ENCODE measurements at regions of chr16 and their contacts with region 1.

Region 1: DNA sequence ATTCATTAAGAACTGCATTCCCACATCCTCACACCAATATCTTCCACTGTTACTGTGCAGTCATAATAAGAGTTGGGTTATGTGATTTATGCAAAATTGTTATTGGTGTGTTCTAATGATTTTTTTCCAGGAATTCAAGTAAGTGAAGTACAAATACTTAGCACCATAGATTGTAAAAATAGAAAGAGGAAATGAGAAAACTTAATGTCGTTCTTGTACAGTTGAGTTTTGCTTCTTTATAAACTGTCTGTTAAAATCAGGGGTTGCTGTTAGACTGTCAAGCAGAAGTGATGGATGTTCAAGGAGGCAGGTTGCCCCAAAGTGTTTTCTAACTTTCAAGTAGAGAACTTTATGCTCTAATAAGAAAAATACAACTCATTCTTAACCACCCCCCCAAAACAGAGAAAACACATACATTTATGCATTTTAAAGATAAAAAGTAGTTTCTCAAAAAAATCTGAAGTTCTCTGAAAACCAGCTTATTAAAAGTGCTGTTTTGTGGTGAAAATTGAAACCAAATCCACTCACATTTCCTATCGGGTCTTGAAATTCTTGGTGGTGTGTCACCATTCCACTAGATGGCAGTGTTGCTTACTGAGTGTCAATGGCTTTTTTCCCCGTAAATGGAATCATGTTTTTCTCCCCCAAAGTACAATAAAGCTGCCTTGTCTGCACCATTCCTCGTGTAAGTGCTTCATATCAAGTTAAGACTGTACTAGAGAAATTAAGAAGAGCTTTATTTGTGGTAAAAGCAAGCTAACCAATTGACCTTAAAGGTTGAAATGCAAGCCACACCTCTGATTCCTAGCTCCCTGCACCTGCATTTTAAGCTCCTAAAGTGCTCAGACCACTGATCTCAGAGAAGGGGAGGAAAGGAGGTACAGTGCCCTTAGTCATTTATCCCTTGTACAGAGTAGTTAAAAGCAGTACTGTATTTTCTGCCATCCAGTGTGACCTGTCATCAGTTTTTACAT is 4.7 kb upstream of the IGSF6 start:
- DNase-seq: peak; percentile 32
- ATAC-seq: peak; percentile 84
- H3K4me3 ChIP-seq: peak overlapping the region; percentile 9; the same call in 1 of the 2 replicates
- H3K27ac ChIP-seq: peak overlapping the region; percentile 38
- H3K4me1 ChIP-seq: peaks cover 29% of the 10 kb centered on the region
- H3K27me3 ChIP-seq: no peaks in the 10 kb centered on the region
- CTCF ChIP-seq: peak; percentile 67 to 81 (median 79)
- EP300 ChIP-seq: peak; percentile 61 to 74; a peak in 3 of 4 replicates
- POLR2A ChIP-seq: no peak
- RAD21 ChIP-seq: peak; percentile 83

Region 2: DNA sequence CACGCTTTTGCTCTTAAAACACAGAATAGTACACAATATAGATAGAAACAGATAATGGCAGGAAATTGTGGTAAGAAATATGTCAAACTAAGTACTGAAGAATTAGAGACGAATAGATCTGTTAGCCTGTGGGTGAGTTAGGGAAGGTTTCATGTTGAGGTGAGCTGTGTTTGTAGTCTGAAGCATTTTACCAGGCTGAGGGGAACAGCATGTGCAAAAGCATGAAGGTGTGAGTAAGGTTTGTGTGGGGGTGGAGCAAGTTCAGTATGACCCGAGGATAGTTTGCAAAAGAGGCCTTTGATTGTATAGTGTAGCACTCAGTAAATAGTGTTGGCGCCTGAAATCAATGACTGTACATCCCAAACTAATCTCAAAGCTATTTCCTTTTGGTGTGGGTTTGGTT is 18.5 kb before region 1 on chr16:
- CTCF ChIA-PET with region 1: interaction called, 100 read pairs
- POLR2A ChIA-PET with region 1: no interaction called
- RAD21 ChIA-PET with region 1: interaction called, 36 read pairs
- SMC1A ChIA-PET with region 1: interaction called, 29 read pairs
- in situ Hi-C with region 1: no loop called
- intact Hi-C with region 1: no loop called
- DNase-seq: no peak
- ATAC-seq: peak; percentile 81
- H3K4me3 ChIP-seq: no peak overlapping the region
- H3K27ac ChIP-seq: no peak overlapping the region
- H3K4me1 ChIP-seq: 0 out of 2 replicates have a peak, but pooled peaks cover 2% of the 10 kb centered on the region
- H3K27me3 ChIP-seq: no peaks in the 10 kb centered on the region
- CTCF ChIP-seq: no peak
- EP300 ChIP-seq: no peak
- POLR2A ChIP-seq: no peak
- RAD21 ChIP-seq: no peak

Region 3: GRCh38 chr16:21673469-21673868 is 16.4 kb after region 1 on chr16:
- CTCF ChIA-PET with region 1: interaction called, 20 read pairs
- POLR2A ChIA-PET with region 1: no interaction called
- RAD21 ChIA-PET with region 1: interaction called, 4 read pairs
- SMC1A ChIA-PET with region 1: no interaction called
- in situ Hi-C with region 1: no loop called
- intact Hi-C with region 1: no loop called
- DNase-seq: no peak
- ATAC-seq: no peak
- H3K4me3 ChIP-seq: no peak overlapping the region
- H3K27ac ChIP-seq: no peak overlapping the region
- H3K4me1 ChIP-seq: no peaks in the 10 kb centered on the region
- H3K27me3 ChIP-seq: peaks cover 0 to 2% of the 10 kb centered on the region in 2 experiments; a peak in 1 of 4 replicates
- CTCF ChIP-seq: no peak
- EP300 ChIP-seq: no peak
- POLR2A ChIP-seq: no peak
- RAD21 ChIP-seq: no peak

Region 4: DNA sequence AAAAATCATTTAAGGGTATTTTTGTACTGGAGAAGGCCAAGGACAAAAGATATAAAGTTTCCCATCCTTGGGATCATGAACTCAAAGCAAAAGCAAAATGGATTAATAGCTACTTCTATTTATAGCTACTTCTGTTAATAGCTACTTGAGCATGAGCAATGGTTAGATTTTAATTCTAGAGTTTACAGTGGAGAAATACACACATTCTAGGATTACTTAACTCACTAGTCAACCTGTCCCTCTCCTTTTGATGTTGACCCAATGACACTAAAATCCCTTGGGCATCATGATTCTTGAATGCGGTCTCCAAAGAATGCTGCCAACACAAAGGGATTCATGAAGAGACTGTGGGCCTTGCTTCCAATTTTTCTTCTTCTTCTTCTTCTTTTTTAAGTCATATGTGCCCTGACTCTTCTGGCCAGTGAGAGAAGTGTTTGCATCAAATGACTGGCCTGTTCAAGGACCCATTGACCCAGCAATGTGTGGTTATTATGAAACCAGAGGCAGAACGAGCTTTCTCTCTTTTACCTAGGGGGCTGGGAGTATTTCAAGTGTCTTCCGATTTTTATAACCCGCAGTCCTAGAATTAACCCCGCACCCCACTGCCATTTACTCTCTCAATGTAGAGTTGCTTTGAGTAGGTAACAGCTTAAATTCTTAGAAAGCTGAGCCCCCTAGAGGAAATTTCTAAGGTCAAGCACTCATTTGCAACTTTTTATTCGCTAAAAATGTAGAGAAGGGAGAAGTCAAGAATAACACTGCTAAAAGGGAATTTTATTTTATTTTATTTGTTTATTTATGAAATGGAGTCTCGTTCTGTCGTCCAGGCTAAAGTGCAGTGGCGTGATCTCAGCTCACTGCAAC is 41.3 kb after region 1 on chr16:
- CTCF ChIA-PET with region 1: interaction called, 176 read pairs
- POLR2A ChIA-PET with region 1: interaction called, 3 read pairs
- RAD21 ChIA-PET with region 1: interaction called, 79 read pairs
- SMC1A ChIA-PET with region 1: interaction called, 142 read pairs
- in situ Hi-C with region 1: loop called (anchors 10 kb)
- intact Hi-C with region 1: no loop called
- DNase-seq: no peak
- ATAC-seq: peak; percentile 30; the same call in 2 of the 3 replicates
- H3K4me3 ChIP-seq: no peak overlapping the region
- H3K27ac ChIP-seq: no peak overlapping the region
- H3K4me1 ChIP-seq: peaks cover 3% of the 10 kb centered on the region; the same call in 1 of the 2 replicates
- H3K27me3 ChIP-seq: no peaks in the 10 kb centered on the region; a peak in 2 of 4 replicates
- CTCF ChIP-seq: peak in 1 of 3 experiments; percentile 17; a peak in 1 of 6 replicates
- EP300 ChIP-seq: no peak
- POLR2A ChIP-seq: no peak
- RAD21 ChIP-seq: peak; percentile 23; the same call in 1 of the 2 replicates

Region 5: DNA sequence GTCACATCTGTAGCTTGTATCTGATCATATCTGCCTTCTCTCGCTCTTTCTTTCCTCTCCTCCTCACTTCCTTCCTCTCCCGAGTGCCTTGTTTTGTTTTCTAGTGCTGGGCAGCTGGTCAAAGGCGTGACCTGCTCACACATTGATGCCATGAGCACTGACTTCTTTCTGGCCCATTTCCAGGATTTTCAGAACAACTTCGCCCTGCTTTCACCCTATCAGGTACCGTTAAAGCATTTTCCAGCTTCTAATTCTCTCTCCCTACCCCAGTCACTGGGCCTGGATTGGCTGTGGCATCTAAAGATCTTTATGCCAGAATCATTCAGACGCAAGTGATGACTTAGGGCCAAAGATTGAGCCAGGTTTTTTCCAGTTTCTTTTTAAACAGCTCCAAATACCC is 62.2 kb after region 1 on chr16:
- CTCF ChIA-PET with region 1: interaction called, 36 read pairs
- POLR2A ChIA-PET with region 1: no interaction called
- RAD21 ChIA-PET with region 1: interaction called, 12 read pairs
- SMC1A ChIA-PET with region 1: interaction called, 12 read pairs
- in situ Hi-C with region 1: no loop called
- intact Hi-C with region 1: no loop called
- DNase-seq: no peak
- ATAC-seq: no peak
- H3K4me3 ChIP-seq: no peak overlapping the region
- H3K27ac ChIP-seq: no peak overlapping the region
- H3K4me1 ChIP-seq: peaks cover 3% of the 10 kb centered on the region
- H3K27me3 ChIP-seq: no peaks in the 10 kb centered on the region
- CTCF ChIP-seq: no peak
- EP300 ChIP-seq: no peak
- POLR2A ChIP-seq: no peak
- RAD21 ChIP-seq: no peak

Region 6: DNA sequence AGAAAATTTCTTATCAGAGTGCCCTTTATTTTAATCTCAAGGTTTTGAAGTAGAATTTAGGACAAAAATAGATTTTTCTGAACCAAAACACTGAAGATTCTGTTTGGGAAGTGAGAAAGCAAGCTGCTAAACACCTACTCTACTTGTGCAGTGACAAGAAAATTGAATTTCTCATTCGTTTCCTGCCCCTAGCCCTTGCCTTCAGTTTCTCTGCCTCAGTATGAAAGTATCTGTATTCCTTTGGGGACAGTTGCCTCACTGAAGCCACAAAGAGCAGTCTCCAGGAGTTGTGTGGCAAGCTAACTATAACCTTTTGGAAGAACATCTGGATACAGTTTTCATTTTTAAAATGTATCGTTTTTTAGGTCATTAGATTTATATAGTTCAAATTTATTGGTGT is 370.6 kb after region 1 on chr16:
- CTCF ChIA-PET with region 1: no interaction called
- POLR2A ChIA-PET with region 1: no interaction called
- RAD21 ChIA-PET with region 1: no interaction called
- SMC1A ChIA-PET with region 1: no interaction called
- in situ Hi-C with region 1: no loop called
- intact Hi-C with region 1: no loop called
- DNase-seq: no peak
- ATAC-seq: peak; percentile 62
- H3K4me3 ChIP-seq: peak overlapping the region; percentile 45; the same call in 1 of the 2 replicates
- H3K27ac ChIP-seq: peak overlapping the region; percentile 52; the same call in 1 of the 2 replicates
- H3K4me1 ChIP-seq: peaks cover 23% of the 10 kb centered on the region
- H3K27me3 ChIP-seq: no peaks in the 10 kb centered on the region
- CTCF ChIP-seq: no peak
- EP300 ChIP-seq: no peak
- POLR2A ChIP-seq: no peak
- RAD21 ChIP-seq: no peak